Esophagus muscularis mucosa (tissue), 4 donors: ENCODE measurements at regions of chrX and their contacts with region 1.

Region 1: GRCh38 chrX:134753718-134754008 is 95.4 kb upstream of the PLAC1 start:
- DNase-seq: no peak
- H3K4me3 ChIP-seq: no peak overlapping the region
- H3K27ac ChIP-seq: no peak overlapping the region
- H3K4me1 ChIP-seq: no peaks in the 10 kb centered on the region
- H3K27me3 ChIP-seq: no peaks in the 10 kb centered on the region
- CTCF ChIP-seq: peak; percentile 25 to 33 (median 27)
- EP300 ChIP-seq: no peak
- POLR2A ChIP-seq: no peak

Region 2: GRCh38 chrX:134484039-134484438 is 269.6 kb before region 1 on chrX:
- intact Hi-C with region 1: loop called (anchors 10 kb)
- DNase-seq: no peak
- H3K4me3 ChIP-seq: no peak overlapping the region
- H3K27ac ChIP-seq: no peak overlapping the region
- H3K4me1 ChIP-seq: no peaks in the 10 kb centered on the region
- H3K27me3 ChIP-seq: no peaks in the 10 kb centered on the region
- CTCF ChIP-seq: peak; percentile 64 to 69 (median 66)
- EP300 ChIP-seq: no peak
- POLR2A ChIP-seq: no peak

Region 3: DNA sequence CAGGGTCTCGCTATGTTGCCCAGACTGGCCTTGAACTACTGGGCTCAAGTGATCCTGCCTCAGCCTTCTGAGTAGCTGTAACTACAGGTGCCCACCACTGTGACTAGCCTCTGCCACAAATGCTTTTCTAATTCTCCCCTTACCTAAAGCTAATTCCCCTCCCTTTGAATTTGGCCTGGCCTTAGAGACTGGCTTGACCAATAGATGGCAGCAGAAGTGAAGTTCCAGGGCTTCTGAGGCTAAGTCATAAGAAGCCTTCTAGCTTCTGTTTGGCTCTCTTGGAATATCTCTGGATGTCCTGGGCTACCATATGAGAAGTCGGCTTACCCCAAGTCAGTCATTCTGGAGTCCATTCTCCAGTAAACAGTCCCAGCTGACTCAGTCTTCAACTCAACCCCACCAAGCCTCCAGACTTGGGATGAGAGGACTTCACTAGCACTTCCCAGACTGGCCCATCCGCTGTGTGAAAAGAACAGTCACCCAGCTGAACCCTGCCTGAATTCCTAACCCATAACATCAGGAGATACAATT is 232.7 kb before region 1 on chrX:
- intact Hi-C with region 1: loop called (anchors 10 kb)
- DNase-seq: no peak
- H3K4me3 ChIP-seq: no peak overlapping the region
- H3K27ac ChIP-seq: no peak overlapping the region
- H3K4me1 ChIP-seq: no peaks in the 10 kb centered on the region
- H3K27me3 ChIP-seq: no peaks in the 10 kb centered on the region
- CTCF ChIP-seq: peak; percentile 31 to 50 (median 45)
- EP300 ChIP-seq: no peak
- POLR2A ChIP-seq: no peak

Region 4: DNA sequence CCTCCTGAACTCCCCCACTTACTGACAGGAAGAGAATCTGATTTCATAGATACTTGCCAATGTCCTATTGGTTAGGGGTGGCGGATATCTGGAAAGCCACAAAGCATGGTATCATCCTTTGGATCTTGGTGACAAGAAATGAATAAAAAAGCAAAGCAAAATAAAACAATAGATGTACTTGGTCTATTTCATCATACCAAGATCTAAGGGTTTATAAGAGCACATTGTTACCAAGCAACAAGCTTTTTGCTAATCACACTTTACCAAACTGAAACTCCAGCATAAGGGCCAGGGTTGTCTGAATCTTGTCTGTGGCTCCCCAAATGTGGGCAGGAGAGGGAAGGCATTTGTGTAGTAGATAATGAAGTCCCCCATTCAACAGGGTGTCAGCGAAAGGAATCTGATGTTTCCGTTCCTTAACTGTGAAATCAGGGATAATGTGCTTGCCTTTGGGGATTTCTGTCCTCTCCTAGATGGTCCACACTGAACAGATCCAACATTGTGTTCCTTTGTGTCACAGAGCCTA is 112.1 kb after region 1 on chrX:
- intact Hi-C with region 1: no loop called
- DNase-seq: no peak
- H3K4me3 ChIP-seq: no peak overlapping the region
- H3K27ac ChIP-seq: no peak overlapping the region
- H3K4me1 ChIP-seq: no peaks in the 10 kb centered on the region
- H3K27me3 ChIP-seq: no peaks in the 10 kb centered on the region
- CTCF ChIP-seq: no peak
- EP300 ChIP-seq: no peak
- POLR2A ChIP-seq: no peak